PC-9 (cell line): ENCODE measurements at regions of chr3 and their contacts with region 1.

Region 1: DNA sequence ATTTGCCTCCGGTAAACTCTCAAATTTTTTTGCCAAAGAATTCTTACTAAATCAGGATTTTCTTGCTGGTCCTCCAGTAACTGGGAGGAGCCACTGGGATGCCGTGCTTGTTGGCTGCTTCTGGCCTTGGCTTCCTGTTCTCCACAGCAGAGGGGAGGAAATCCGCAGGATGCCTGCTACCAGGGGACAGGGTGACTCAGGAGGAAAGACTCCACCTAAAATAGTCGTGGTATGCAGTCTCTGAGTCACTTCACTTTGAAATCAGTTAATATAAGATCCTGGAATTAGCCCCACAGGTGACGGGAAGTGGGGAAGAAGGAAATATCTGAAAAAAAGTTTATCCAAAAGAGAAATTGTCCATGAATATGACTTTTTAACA is 6.5 kb upstream of the TM4SF18 start:
- DNase-seq: peak; percentile 93 to 98
- H3K4me3 ChIP-seq: peak overlapping the region; percentile 20; the same call in 1 of the 2 replicates
- H3K27ac ChIP-seq: peak overlapping the region; percentile 97
- H3K4me1 ChIP-seq: peaks cover 41% of the 10 kb centered on the region
- H3K27me3 ChIP-seq: no peaks in the 10 kb centered on the region
- CTCF ChIP-seq: no peak

Region 2: DNA sequence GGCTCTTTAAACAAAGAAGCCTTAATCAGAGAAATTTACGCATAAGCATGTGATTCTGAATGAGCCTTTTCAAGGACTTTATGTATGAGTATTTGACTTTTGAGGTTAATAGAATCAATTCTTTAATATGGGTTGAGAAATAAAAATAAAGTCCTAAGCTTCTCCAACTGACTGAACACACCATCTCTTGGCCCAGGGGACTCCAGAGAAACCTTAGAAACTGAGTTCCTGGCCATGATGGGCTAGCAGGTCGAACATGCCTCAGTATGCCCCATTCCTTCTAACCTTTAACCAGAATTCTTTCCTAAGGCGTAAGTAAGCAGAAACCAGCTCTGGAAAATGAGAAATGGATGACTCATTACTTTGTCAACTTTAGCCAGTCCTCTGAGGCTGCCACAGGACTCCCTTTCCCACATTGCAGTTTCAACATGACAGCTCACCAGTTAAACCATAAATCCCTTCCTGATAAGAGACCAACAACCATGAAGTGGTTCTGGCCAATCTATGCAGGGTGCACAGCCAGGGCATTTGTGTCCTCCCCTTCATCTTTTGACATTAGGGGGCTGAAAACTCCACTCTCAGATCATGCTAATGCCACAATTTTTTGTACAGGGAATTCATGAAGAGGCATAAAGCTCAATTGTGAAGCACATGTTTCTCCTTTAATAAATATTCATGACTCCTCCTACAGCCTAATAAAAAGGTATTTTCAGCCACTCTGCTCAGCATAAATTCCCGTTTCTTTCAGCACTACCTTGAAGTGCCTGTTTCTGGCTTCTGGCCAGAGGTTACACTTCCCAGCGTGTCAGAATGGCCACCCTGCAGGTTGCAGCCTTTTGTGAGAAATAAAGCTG is 39.8 kb before region 1 on chr3:
- CTCF ChIA-PET with region 1: interaction called, 3 read pairs
- POLR2A ChIA-PET with region 1: interaction called, 6 read pairs
- intact Hi-C with region 1: loop called (anchors 1 kb)
- DNase-seq: peak; percentile 76 to 99
- H3K4me3 ChIP-seq: peak overlapping the region; percentile 42; the same call in 1 of the 2 replicates
- H3K27ac ChIP-seq: peak overlapping the region; percentile 100
- H3K4me1 ChIP-seq: peaks cover 55% of the 10 kb centered on the region
- H3K27me3 ChIP-seq: no peaks in the 10 kb centered on the region
- CTCF ChIP-seq: no peak

Region 3: GRCh38 chr3:149366941-149367840 is 27.3 kb after region 1 on chr3:
- CTCF ChIA-PET with region 1: no interaction called
- POLR2A ChIA-PET with region 1: interaction called, 5 read pairs
- intact Hi-C with region 1: loop called (anchors 1 kb)
- DNase-seq: peak; percentile 86 to 99
- H3K4me3 ChIP-seq: 0 out of 2 replicates have a peak overlapping the region, but pooled peaks have one; percentile 6
- H3K27ac ChIP-seq: peak overlapping the region; percentile 99
- H3K4me1 ChIP-seq: peaks cover 63% of the 10 kb centered on the region
- H3K27me3 ChIP-seq: no peaks in the 10 kb centered on the region
- CTCF ChIP-seq: no peak

Region 4: DNA sequence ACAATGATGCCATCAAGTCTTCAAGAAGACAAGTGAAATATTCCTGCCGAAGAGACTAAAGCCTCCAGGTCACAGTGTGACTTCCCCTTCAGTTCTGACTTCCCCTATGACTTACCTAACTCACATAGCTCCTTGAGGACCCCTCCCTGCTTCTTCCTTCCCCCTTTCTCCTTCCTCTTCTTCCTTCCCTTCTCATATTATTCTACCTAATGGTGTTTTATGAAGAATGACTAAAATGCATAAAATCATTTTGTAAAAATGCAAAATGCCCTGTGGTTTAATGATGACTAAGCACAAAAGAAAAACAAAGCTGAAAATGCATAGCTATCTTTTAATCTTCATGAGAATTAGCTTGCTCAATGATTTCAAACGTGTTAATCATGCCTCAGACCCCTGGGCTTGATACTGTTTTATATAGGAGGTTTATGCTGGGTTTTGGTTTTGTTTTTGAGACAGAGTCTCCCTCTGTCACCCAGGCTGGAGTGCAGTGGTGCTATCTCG is 108.5 kb after region 1 on chr3:
- CTCF ChIA-PET with region 1: no interaction called
- POLR2A ChIA-PET with region 1: interaction called, 20 read pairs
- intact Hi-C with region 1: no loop called
- DNase-seq: peak; percentile 22 to 81
- H3K4me3 ChIP-seq: no peak overlapping the region
- H3K27ac ChIP-seq: peak overlapping the region; percentile 81
- H3K4me1 ChIP-seq: peaks cover 36% of the 10 kb centered on the region
- H3K27me3 ChIP-seq: no peaks in the 10 kb centered on the region
- CTCF ChIP-seq: no peak